CD4-positive, alpha-beta memory T cell (primary cell): ENCODE measurements at regions of chr9 and their contacts with region 1.

Region 1: GRCh38 chr9:35116898-35117551 is 1.4 kb upstream of the ATOSB start:
- DNase-seq: peak; percentile 86 to 91 (median 89)
- H3K4me3 ChIP-seq: peak overlapping the region; percentile 86 to 88
- H3K4me3 Mint-ChIP-seq: peak overlapping the region; percentile 89 to 95 (median 93)
- H3K27ac ChIP-seq: peak overlapping the region; percentile 68
- H3K27ac Mint-ChIP-seq: peak overlapping the region; percentile 92 to 99 (median 96)
- H3K4me1 ChIP-seq: peaks cover 42% of the 10 kb centered on the region
- H3K4me1 Mint-ChIP-seq: peaks cover 29 to 47% (median 35%) of the 10 kb centered on the region in 4 donors
- H3K27me3 ChIP-seq: no peaks in the 10 kb centered on the region
- H3K27me3 Mint-ChIP-seq: no peaks in the 10 kb centered on the region

Region 2: GRCh38 chr9:34611829-34612630 is 505.0 kb before region 1 on chr9 and contains the start of gene RPP25L:
- CTCF ChIA-PET with region 1: no interaction called
- POLR2A ChIA-PET with region 1: no interaction called
- intact Hi-C with region 1: loop called (anchors 1 kb)
- DNase-seq: peak; percentile 83 to 89 (median 86)
- H3K4me3 ChIP-seq: peak within 1 kb of the TSS; percentile 81 to 88
- H3K4me3 Mint-ChIP-seq: peak within 1 kb of the TSS; percentile 87 to 99 (median 92)
- H3K27ac ChIP-seq: peak within 1 kb of the TSS; percentile 71
- H3K27ac Mint-ChIP-seq: peak within 1 kb of the TSS; percentile 83 to 97 (median 96)
- H3K4me1 ChIP-seq: peaks cover 19% of the 10 kb centered on the region
- H3K4me1 Mint-ChIP-seq: peaks cover 7 to 35% (median 25%) of the 10 kb centered on the region in 4 donors
- H3K27me3 ChIP-seq: no peaks in the 10 kb centered on the region
- H3K27me3 Mint-ChIP-seq: no peaks in the 10 kb centered on the region
- total RNA-seq, gene RPP25L: 28.5 to 28.9 TPM

Region 3: DNA sequence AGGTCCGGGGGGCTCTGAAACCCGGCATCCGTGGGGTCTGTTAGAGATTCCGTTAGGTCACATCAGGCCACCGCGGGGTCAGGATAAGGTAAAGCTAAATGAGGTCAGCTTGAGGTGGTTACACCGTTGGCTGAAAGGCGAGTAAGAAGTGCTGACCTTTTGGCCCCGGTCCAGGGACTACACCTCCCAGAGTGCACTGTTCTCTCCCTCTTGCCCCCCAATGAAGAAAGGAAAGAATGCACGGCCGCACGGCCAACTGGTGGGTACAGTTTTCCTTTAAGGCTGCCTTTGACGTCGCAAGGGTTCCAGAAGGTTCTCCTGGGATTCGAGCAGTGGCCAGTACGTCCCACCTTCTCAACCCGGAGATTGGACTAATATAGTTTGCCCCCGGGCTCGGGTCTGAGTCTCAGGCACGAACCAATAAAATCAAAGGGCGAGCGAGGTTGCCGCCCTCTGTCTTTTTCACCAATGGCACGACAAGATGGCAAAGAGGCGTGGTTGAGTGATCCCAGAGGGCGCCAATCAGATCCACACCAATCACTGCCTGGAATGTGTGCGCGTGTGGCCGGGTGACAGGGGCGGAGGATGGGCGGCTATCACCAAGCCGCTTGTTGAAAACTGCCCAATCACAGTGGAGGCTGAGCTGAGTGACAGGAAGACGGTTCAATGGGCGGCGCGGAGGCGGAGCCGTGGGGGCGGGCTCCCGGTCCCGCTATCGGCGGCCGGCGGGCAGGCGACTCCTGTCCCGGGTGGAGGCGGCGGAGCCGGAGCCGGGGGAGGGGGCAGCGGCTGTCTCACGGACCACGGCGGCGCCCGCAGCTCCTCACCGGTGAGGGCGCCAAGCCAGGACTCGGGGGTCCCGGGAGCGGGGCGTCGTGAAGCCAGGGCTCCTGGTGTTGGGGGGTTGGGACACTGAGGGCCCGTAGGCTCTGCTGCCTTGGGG is 127.8 kb before region 1 on chr9 and contains the start of gene DNAJB5:
- CTCF ChIA-PET with region 1: no interaction called
- POLR2A ChIA-PET with region 1: no interaction called
- intact Hi-C with region 1: loop called (anchors 1 kb)
- DNase-seq: peak; percentile 96 to 99 (median 98)
- H3K4me3 ChIP-seq: peak within 1 kb of the TSS; percentile 47 to 83
- H3K4me3 Mint-ChIP-seq: peak within 1 kb of the TSS; percentile 90 to 99 (median 94)
- H3K27ac ChIP-seq: peak within 1 kb of the TSS; percentile 69
- H3K27ac Mint-ChIP-seq: peak within 1 kb of the TSS; percentile 84 to 95 (median 94)
- H3K4me1 ChIP-seq: peaks cover 42% of the 10 kb centered on the region
- H3K4me1 Mint-ChIP-seq: peaks cover 28 to 62% (median 48%) of the 10 kb centered on the region in 4 donors
- H3K27me3 ChIP-seq: no peaks in the 10 kb centered on the region
- H3K27me3 Mint-ChIP-seq: no peaks in the 10 kb centered on the region
- total RNA-seq, gene DNAJB5: 0.73 to 0.97 TPM

Region 4: DNA sequence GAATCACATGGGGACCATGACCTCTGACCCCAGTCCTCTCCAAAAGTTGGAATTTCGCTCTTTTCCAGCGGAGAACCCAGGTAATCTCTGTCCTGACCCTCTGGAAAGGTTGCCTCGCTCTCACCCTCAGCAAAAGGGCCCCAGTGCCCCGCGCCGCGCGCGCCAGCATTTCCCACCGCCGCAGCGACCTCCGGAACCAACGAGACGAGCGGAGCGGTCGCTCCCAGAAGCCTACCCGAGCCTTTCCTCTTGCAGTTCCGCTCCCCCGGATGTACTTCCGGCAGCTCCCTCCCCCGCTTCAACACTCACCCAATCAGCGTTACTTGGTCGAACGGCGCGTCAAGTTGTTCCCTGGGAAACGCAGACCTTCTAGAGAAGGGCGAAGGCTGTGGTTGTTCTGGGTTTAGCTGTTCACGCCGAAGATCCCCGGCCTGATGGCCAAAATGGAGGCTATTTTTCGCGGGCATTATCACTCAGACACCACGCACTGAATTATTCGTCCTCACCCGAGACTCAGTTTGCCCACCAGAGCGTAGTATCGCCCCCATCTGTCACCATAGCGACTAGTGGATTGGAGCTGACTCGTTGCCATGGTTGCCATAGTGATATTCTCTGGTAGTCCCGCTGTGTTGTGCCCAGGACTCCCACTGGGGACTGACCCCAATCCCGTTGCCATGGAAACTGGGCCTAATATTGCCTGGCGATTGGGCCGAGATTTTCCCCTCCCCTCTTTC is 13.9 kb before region 1 on chr9 and contains the start of gene STOML2:
- CTCF ChIA-PET with region 1: interaction called, 7 read pairs
- POLR2A ChIA-PET with region 1: interaction called, 46 read pairs
- intact Hi-C with region 1: loop called (anchors 1 kb)
- DNase-seq: peak; percentile 91 to 96 (median 93)
- H3K4me3 ChIP-seq: peak within 1 kb of the TSS; percentile 83 to 96
- H3K4me3 Mint-ChIP-seq: peak within 1 kb of the TSS; percentile 90 to 98 (median 94)
- H3K27ac ChIP-seq: peak within 1 kb of the TSS; percentile 95
- H3K27ac Mint-ChIP-seq: peak within 1 kb of the TSS; percentile 97 to 100 (median 99)
- H3K4me1 ChIP-seq: peaks cover 23% of the 10 kb centered on the region
- H3K4me1 Mint-ChIP-seq: peaks cover 19 to 46% (median 30%) of the 10 kb centered on the region in 4 donors
- H3K27me3 ChIP-seq: no peaks in the 10 kb centered on the region
- H3K27me3 Mint-ChIP-seq: no peaks in the 10 kb centered on the region
- total RNA-seq, gene STOML2: 42.9 to 45.3 TPM

Region 5: DNA sequence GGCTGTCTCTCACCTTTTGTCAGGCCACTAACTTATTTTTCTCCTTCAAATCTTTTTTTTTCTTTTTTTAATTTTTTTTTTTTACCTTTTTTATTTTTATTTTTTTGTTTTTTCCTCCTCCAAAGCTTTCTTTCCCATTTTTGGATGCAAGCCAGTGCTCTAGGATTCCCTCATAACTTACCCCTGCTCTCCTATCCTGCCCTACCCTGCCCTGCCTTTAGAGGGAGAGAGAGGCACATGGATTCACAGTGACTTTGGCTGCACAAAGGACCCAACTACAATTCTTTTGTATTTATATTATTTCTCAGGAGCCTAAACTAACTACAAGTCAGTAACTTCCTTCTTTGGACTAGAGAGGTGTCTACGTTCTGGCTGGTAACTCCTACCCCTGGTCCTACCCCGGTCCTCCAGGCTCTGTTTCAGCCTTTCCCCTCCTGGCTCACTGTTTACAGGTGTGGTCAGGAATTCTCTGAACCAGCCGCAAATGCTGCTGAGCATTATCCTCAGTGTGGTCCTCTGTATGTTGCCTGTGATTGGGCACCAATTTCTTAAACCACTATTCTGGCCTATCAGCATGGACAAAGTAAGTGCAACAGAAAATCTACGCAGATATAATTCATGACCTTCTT is 364.4 kb after region 1 on chr9:
- CTCF ChIA-PET with region 1: interaction called, 28 read pairs
- POLR2A ChIA-PET with region 1: no interaction called
- intact Hi-C with region 1: loop called (anchors 1 kb)
- DNase-seq: peak in 2 of 5 donors; percentile 17 to 23
- H3K4me3 ChIP-seq: no peak overlapping the region
- H3K4me3 Mint-ChIP-seq: no peak overlapping the region
- H3K27ac ChIP-seq: no peak overlapping the region
- H3K27ac Mint-ChIP-seq: no peak overlapping the region
- H3K4me1 ChIP-seq: no peaks in the 10 kb centered on the region
- H3K4me1 Mint-ChIP-seq: no peaks in the 10 kb centered on the region
- H3K27me3 ChIP-seq: no peaks in the 10 kb centered on the region
- H3K27me3 Mint-ChIP-seq: peaks cover 7 to 10% of the 10 kb centered on the region in 2 donors

Region 6: DNA sequence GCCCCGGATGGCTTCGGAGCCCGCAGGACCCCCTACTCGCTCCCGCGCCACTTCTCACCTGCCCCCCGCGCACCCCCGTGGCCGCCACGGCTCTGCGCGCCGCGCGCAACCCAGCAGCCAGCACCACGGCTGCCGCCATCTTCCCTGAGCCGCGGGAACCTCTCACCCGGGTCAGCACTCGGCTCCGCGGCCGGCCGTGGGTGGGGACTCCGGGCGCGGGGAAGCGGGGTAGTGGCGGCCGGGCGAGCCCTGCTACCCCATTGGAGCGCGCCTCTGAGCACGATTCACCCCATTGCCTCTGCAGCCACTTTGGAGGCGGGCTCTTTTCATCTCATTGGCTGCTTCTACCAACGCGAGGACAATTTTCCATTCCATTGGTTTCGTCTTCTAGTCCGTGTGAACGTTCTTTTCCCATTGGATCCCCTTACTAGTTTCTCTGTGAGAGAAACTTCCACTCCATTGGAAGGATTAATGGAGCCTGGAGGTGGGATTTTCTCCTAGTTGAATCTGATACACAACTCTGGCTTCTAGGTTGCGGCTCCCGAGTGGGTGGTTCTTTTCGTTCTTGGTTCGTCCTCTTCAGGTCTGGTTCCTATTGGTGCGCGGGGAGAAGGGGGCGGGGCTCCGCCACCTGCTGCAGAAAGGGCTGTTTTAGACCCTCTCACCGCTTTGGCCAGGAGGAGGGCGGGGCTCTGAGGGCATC is 698.0 kb after region 1 on chr9 and contains the start of gene HINT2:
- CTCF ChIA-PET with region 1: no interaction called
- POLR2A ChIA-PET with region 1: interaction called, 3 read pairs
- intact Hi-C with region 1: loop called (anchors 1 kb)
- DNase-seq: peak; percentile 96 to 99 (median 98)
- H3K4me3 ChIP-seq: peak within 1 kb of the TSS; percentile 95 to 100
- H3K4me3 Mint-ChIP-seq: peak within 1 kb of the TSS; percentile 89 to 98 (median 95)
- H3K27ac ChIP-seq: peak within 1 kb of the TSS; percentile 70
- H3K27ac Mint-ChIP-seq: peak within 1 kb of the TSS; percentile 91 to 98 (median 96)
- H3K4me1 ChIP-seq: peaks cover 34% of the 10 kb centered on the region
- H3K4me1 Mint-ChIP-seq: peaks cover 20 to 50% (median 36%) of the 10 kb centered on the region in 4 donors
- H3K27me3 ChIP-seq: no peaks in the 10 kb centered on the region
- H3K27me3 Mint-ChIP-seq: no peaks in the 10 kb centered on the region
- total RNA-seq, gene HINT2: 22.9 to 30.2 TPM